HepG2 (cell line): ENCODE measurements at regions of chrX and their contacts with region 1.

Region 1: DNA sequence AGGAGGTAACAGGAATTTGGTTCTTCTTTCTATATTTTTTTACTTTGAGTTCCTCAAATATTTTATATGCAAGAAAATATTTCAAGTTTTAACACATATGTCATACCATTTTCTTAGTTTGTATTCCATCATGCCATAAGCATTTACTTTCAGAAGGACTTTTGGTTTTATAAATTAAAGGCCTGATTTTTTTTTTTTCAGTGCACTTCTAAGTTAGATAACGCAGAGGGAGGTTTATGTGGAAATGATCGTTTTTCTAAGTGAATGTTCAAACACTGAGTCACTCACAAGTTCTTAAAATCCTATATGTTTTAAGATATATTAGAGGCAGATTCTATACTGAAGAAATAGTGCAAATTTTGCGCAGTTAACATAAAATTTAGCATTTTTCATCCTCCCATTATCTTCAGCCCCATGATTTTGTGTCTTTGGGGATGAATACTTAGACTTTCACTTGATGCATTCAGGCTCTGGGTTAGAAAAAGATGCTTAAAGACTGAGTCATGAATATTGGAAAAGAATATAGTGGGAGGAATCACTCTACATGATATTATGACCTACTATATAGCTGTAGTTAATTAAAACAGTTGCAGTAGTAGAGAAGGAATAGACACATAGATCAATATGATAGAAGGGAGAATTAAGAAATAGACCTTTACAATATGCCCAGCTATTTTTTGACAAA is 54.9 kb downstream of the COL4A5 start:
- DNase-seq: no peak
- ATAC-seq: no peak
- H3K4me3 ChIP-seq: no peak overlapping the region
- H3K27ac ChIP-seq: no peak overlapping the region
- H3K4me1 ChIP-seq: 0 out of 2 replicates have a peak, but pooled peaks cover 5% of the 10 kb centered on the region
- H3K27me3 ChIP-seq: no peaks in the 10 kb centered on the region
- CTCF ChIP-seq: no peak
- EP300 ChIP-seq: no peak
- POLR2A ChIP-seq: no peak
- RAD21 ChIP-seq: no peak

Region 2: DNA sequence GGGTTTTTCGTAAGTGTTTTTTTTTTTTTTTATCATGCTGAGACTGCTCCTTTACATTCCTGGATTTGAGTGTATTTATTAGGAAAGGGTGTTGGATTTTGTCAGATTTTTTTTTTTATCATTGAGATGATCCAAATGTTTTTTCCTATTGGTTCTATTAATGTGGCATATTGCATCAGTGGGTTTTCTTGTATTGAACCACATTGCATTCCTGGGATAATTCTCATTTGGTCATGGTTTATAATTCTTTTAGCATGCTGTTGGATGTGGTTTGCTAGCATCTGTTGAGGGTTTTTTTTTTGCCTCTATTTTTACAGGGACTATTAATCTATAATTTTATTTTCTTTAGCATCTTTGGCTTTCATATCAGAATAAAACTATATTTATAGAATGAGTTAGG is 26.1 kb before region 1 on chrX:
- CTCF ChIA-PET with region 1: no interaction called
- POLR2A ChIA-PET with region 1: no interaction called
- in situ Hi-C with region 1: no loop called
- intact Hi-C with region 1: loop called (anchors 1 kb)
- DNase-seq: no peak
- ATAC-seq: no peak
- H3K4me3 ChIP-seq: no peak overlapping the region
- H3K27ac ChIP-seq: no peak overlapping the region
- H3K4me1 ChIP-seq: no peaks in the 10 kb centered on the region
- H3K27me3 ChIP-seq: no peaks in the 10 kb centered on the region
- CTCF ChIP-seq: no peak
- EP300 ChIP-seq: no peak
- POLR2A ChIP-seq: no peak
- RAD21 ChIP-seq: no peak